Dorsolateral prefrontal cortex (tissue), 120 donors: ENCODE measurements at regions of chr2 and their contacts with region 1.

Region 1: DNA sequence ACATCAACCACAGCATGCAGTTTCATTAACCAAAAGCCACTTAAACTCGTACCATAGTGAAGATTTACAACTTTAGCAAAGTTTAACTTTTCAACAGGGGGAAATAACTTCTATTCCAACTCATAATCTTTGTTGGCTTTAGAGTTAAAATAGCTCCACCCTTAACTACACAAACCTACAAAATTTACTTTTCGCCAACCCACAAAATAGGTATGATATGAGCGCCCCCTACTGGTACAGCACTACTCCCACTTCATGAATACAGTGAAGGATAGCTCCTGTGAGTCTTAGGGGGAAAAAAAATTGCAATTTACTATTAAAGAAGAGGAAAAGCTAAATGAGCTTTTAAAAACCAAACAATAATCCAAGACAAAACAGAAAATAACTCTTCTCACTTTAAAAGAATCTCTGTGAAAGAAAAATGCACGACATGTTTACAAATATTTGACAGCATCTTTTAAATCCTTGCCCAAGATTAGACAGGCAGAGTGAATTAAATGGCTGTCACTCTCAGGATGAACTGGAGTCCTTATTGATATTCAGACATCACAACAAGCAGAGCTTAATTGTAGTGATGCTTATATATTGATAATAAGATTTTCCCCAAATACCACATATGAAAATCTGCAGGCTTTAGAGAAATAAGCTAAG is 32.2 kb downstream of the TMEFF2 start:
- DNase-seq: peak in 6 of 10 donors; percentile 32 to 80 (median 61)
- H3K4me3 ChIP-seq: peak overlapping the region in 9 of 59 donors; percentile 5 to 39 (median 13)
- H3K27ac ChIP-seq: peak overlapping the region in 40 of 59 donors; percentile 3 to 74 (median 38)
- H3K27me3 ChIP-seq: peaks cover 0 to 3% (median 0%) of the 10 kb centered on the region in 45 donors
- CTCF ChIP-seq: peak; percentile 82 to 98 (median 94)

Region 2: GRCh38 chr2:191555092-191555742 is 607.3 kb before region 1 on chr2:
- intact Hi-C with region 1: loop called in 1 of 2 experiments (anchors 10 kb)
- DNase-seq: peak; percentile 61 to 89 (median 82)
- H3K4me3 ChIP-seq: peak overlapping the region in 8 of 59 donors; percentile 0 to 47 (median 18)
- H3K27ac ChIP-seq: no peak overlapping the region
- H3K27me3 ChIP-seq: peaks cover 0 to 12% (median 0%) of the 10 kb centered on the region in 45 donors
- CTCF ChIP-seq: peak; percentile 62 to 89 (median 80)

Region 3: GRCh38 chr2:191942090-191942738 is 220.3 kb before region 1 on chr2:
- intact Hi-C with region 1: loop called in 1 of 2 experiments (anchors 10 kb)
- DNase-seq: no peak
- H3K4me3 ChIP-seq: peak overlapping the region in 1 of 59 donors; percentile 23
- H3K27ac ChIP-seq: peak overlapping the region in 14 of 59 donors; percentile 1 to 44 (median 20)
- H3K27me3 ChIP-seq: no peaks in the 10 kb centered on the region
- CTCF ChIP-seq: no peak

Region 4: DNA sequence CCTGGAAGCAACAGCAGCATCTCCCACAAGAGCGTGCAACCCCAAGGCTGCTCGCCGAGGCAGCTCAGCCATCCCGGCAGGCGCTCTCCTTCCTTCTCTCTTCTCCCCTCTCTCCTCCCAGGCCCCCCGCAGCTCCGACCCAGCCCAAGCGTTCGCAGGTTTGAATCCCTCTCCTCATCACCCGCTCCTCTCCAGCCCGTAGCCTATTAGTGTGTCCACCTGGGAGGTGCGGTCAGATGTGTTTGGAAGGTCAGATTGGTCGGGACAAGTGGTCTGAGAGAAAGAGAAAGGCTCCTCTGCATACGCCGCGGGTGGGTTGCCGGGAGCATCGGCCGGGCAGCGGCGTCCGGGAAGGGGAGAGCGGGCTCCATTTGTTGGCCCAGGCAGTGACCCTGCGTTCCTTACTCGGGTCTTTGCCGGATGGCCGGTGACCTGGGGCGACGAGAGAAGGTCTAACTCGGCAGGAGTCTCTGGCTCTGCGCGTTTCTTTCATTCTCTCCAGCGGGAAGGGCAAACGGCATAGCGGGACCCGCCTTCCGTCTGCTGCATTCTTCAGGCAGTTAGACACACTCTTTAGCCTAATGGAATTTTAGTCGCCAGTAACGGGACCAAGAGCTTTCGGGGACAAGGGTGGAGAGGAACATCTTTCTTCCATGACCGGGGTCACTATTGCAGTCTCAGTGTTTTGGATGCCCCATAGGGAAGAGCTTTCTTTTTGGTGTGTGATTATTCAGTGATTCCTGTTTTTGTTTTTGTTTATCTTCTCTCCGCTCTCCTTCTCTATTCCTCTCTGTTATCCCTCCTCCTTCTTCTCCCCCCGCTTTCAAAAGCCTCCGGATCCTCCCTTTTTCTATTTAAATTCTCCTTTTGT is 33.3 kb after region 1 on chr2:
- intact Hi-C with region 1: no loop called
- DNase-seq: peak in 9 of 10 donors; percentile 26 to 64 (median 44)
- H3K4me3 ChIP-seq: peak overlapping the region; percentile 58 to 93 (median 78)
- H3K27ac ChIP-seq: peak overlapping the region; percentile 84 to 98 (median 96)
- H3K27me3 ChIP-seq: peaks cover 0 to 35% (median 0%) of the 10 kb centered on the region in 45 donors
- CTCF ChIP-seq: no peak

Region 5: DNA sequence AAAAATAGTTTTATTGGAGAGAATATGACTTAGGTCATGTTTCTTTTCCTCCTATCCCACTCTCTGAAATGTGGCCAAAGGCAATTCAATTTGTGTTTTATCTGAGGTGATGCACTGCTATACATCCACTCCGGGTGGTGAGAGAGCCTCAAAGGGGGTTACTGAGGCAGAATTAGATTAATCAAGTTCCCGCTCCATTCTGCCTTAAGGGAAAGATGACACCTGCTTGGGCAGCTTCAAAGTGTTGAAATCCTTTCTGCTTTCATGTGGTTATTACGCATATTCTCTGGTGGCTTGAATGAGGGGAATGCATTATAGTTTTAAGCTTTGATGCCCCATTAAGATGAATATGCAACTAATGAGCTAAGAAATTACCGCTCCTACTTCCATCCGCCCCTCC is 245.2 kb after region 1 on chr2:
- intact Hi-C with region 1: no loop called
- DNase-seq: no peak
- H3K4me3 ChIP-seq: no peak overlapping the region
- H3K27ac ChIP-seq: no peak overlapping the region
- H3K27me3 ChIP-seq: peaks cover 0 to 6% (median 0%) of the 10 kb centered on the region in 45 donors
- CTCF ChIP-seq: no peak